T-cell (primary cell): ENCODE measurements at regions of chr10 and their contacts with region 1.

Region 1: DNA sequence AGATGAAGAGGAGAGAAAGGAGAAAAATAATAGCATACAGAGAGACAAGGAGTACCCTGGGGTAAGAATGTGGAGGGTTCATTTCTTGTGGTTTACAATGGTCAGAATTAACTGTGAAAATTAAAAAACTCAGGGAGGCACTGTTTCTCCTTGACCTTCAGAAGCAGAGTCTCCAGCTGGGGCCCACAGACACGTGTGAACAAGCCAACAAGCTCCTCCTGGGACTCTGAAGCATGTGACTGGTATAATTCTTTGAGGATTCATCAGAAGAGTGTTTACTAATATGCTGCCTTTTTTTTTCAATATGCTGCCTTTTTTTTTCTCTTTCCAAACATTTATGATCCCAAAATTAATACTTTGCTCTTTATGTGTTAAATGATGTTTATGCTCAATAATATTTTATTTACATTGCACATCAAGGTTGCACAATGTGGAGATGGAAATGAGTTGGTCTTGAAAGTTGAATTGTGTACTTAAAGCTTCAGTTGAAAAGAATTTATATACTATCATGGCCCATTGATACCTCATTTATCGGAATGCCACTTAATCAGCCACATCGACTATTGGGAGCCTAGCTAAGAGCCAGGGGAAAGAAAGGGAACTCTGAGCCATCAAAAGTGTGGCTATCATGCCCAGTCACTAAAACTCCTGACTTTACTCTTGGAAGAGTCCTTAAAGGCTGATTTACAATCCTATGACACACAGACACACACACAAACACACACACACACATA is 134.7 kb upstream of the RHOBTB1 start:
- DNase-seq: no peak
- ATAC-seq: no peak
- H3K4me3 ChIP-seq: no peak overlapping the region
- H3K4me3 Mint-ChIP-seq: no peak overlapping the region
- H3K27ac ChIP-seq: no peak overlapping the region
- H3K27ac Mint-ChIP-seq: no peak overlapping the region
- H3K4me1 ChIP-seq: no peaks in the 10 kb centered on the region
- H3K4me1 Mint-ChIP-seq: no peaks in the 10 kb centered on the region
- H3K27me3 ChIP-seq: no peaks in the 10 kb centered on the region
- H3K27me3 Mint-ChIP-seq: peaks cover 0 to 3% of the 10 kb centered on the region in 2 donors

Region 2: DNA sequence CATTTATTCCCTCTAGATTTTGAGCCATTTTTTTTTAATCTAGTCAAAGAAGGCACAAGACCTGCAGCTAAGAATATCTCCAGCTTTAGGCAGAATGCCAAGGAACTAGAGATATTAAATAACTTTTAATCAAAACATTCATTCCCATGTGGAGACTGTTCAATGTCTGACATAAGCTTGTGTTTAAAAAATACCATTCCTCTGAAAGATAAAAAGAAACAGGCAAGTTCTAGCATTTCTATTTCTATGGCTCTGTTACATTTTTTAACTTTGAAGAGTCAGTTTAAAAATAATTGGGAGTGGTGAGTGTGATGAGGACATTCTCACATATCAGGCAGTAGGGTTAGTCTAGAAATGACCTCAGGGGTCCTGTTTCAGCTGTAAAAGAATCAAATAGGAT is 182.7 kb before region 1 on chr10:
- CTCF ChIA-PET with region 1: no interaction called
- POLR2A ChIA-PET with region 1: interaction called in 1 of 2 experiments, 10 read pairs
- DNase-seq: no peak
- ATAC-seq: no peak
- H3K4me3 ChIP-seq: no peak overlapping the region
- H3K4me3 Mint-ChIP-seq: no peak overlapping the region
- H3K27ac ChIP-seq: no peak overlapping the region
- H3K27ac Mint-ChIP-seq: no peak overlapping the region
- H3K4me1 ChIP-seq: no peaks in the 10 kb centered on the region
- H3K4me1 Mint-ChIP-seq: no peaks in the 10 kb centered on the region
- H3K27me3 ChIP-seq: peaks cover 0 to 3% of the 10 kb centered on the region in 2 experiments
- H3K27me3 Mint-ChIP-seq: peaks cover 8 to 11% of the 10 kb centered on the region in 2 donors

Region 3: GRCh38 chr10:61052469-61053205 is 26.1 kb before region 1 on chr10:
- CTCF ChIA-PET with region 1: no interaction called
- POLR2A ChIA-PET with region 1: no interaction called
- DNase-seq: no peak
- ATAC-seq: no peak
- H3K4me3 ChIP-seq: no peak overlapping the region
- H3K4me3 Mint-ChIP-seq: no peak overlapping the region
- H3K27ac ChIP-seq: no peak overlapping the region
- H3K27ac Mint-ChIP-seq: no peak overlapping the region
- H3K4me1 ChIP-seq: no peaks in the 10 kb centered on the region
- H3K4me1 Mint-ChIP-seq: no peaks in the 10 kb centered on the region
- H3K27me3 ChIP-seq: peaks cover 0 to 3% of the 10 kb centered on the region in 2 experiments
- H3K27me3 Mint-ChIP-seq: no peaks in the 10 kb centered on the region